Right ventricle myocardium inferior (tissue), 1 donor: ENCODE measurements at regions of chr10 and their contacts with region 1.

Region 1: DNA sequence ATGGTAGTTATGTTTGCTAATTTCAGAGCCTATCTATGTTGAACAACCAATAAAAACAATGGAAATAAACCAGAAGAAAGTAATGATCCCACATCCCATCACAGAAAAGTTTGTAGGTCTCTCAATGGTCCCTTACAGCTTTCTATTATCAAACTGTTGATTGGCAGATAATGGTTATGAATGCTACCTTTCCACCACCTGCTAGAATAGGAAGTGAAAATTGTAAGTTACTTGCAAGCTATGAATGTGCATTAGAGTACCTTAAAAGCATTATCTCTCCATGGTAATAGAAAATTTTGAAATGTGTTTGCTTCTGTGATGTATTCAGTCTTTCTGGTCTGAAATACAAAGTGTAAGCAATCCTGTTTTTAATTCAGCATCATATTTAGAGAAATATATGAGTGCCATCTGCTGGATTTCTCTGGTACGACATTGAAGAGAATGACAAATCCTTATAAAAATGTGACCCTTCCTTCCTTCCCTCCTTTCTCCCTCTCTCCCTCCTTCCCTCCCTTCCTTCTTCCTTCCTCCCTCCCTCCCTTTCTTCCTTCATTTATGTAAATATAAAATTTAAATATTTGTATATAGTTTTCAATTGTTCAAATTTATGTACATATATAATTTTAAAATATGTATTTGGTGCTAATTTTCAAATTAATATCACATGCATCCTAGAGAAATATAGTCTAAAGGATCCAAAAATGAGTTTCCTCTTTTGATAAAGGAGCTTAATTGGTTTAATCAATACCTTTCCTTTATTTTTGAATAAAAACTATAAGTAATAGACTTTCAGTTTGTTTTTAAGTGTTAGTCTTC is 41.4 kb upstream of the PNLIPRP3 start:
- DNase-seq: no peak
- ATAC-seq: no peak

Region 2: GRCh38 chr10:115171392-115171960 is 1214.7 kb before region 1 on chr10:
- intact Hi-C with region 1: loop called (anchors 10 kb)
- DNase-seq: no peak
- ATAC-seq: no peak

Region 3: DNA sequence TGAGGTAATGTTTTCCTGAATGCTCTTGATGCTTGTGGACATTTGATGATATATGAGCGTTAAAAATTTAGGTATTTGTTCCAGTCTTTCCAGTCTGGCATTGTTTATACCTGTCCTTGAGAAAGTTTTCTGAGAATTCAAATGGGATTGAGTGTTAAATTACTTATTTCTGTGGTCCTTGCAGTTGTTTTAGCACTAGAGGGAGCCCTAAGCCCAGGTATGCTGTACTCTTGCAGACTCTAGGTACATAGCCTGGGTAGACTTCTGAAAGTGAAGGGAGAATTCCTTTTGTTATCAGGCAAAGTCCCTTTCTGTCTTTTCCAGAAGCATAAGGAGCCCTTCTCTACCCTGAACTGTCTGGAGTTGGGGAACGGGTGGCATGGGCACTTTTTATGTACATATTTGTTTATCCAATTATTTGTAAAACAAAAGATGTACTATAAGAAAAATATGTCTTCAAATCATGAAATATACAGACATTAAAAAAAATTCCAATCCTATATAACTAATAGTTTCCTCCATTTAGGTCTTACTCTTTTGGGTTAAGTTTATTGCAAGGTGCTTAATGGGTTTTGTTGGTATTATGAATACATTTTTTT is 1030.9 kb before region 1 on chr10:
- intact Hi-C with region 1: loop called (anchors 5 kb)
- DNase-seq: no peak
- ATAC-seq: no peak

Region 4: DNA sequence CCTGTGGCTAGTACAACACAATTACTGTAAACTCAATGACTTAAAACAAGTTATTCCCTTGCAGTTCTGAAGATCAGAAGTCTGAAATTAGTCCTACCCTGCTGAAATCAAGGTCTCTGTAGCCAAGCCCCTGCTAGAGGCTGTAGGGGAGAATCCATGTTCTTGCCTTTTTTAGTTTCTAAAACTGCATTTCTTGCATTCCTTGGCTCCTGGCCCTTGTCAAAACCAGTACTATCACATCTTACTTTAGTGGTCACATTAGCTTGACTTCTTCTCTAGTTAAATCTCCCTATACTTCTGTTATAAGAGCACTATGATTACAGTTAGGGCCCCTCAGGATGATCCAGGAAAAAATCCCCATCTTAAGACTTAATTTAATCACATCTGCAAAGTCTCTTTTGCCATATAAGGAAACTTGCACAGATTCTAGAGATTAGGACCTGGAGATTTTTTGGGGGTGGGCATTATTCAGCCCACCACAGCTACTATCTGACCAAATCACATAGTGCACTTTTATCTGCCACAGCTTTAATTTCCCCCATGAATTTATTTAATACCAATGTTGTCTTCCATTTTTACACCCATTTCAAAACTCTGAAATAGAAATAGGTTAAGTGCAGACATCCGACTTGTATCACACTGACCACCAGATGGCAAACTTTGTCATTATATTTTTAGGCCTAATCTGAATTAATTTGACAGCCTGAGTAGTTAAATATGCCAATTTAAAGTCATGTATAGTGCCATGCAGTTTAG is 680.0 kb before region 1 on chr10:
- intact Hi-C with region 1: loop called (anchors 10 kb)
- DNase-seq: no peak
- ATAC-seq: no peak

Region 5: DNA sequence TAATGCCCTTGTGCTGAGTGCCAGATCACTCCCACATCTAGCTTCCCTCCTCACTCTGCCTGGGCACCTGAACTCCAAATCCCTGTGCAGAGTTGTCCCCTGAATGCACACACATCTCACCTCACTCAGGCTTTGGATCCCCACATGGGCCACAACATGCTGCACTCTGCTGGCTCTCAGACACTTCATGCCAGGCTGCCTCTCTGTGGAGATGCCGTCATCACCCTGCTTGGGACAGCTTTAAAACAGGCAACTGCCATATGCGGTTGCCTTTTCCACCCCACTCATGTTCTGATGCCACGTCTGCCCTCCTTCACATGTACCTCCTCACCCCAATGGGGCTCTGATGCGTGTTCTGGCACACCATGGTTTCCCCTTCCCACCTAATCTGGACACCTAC is 590.2 kb before region 1 on chr10:
- intact Hi-C with region 1: loop called (anchors 5 kb)
- DNase-seq: no peak
- ATAC-seq: no peak